ENCODE measurements at regions of chrX and their contacts with region 1.

Region 1: DNA sequence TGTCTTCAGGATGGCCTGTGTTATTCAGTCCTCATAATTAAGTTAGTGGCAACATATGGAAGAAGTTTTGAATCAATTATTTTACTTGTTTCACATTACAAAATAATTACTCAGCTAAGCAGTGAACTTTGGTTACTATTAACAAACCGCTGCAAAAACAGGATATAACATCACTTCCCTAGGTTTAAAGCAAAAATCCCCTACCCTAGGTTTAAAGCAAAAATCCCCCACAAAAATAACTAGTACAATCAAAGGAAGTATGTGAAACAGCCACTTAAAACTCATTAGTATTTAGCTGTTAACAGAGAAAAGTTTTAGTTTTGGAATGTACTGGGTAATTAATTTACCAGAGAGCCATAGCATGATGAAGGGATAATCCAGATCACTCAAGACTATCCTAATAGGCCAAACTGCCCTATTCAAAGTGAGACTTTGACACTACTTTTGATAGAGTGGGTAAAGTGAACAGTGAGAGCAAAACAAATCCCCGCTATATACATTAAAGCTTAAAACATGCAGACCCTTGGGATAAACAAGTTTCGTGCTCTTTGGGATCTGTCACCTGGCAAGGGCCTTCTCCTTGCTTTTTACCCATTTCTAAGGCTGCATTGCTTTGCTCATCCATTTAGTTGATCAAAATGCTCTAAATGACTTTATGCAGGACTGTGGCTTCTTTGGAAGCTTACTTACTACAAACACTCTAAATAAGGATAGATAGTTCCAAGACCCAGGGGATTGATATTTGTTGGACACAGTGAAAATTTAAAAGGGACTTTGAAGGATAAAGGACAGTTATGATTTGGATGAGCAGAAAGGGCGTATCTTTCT is 36.4 kb upstream of the GPR174 start:
- DNase-seq: no peak
- H3K4me3 Mint-ChIP-seq: peak overlapping the region; percentile 32
- H3K27ac Mint-ChIP-seq: peak overlapping the region; percentile 94
- H3K4me1 Mint-ChIP-seq: peaks cover 30% of the 10 kb centered on the region
- H3K27me3 Mint-ChIP-seq: no peaks in the 10 kb centered on the region

Region 2: GRCh38 chrX:79065696-79066095 is 42.4 kb before region 1 on chrX:
- CTCF ChIA-PET with region 1: no interaction called
- POLR2A ChIA-PET with region 1: no interaction called
- DNase-seq: no peak
- H3K4me3 Mint-ChIP-seq: no peak overlapping the region
- H3K27ac Mint-ChIP-seq: no peak overlapping the region
- H3K4me1 Mint-ChIP-seq: no peaks in the 10 kb centered on the region
- H3K27me3 Mint-ChIP-seq: no peaks in the 10 kb centered on the region

Region 3: DNA sequence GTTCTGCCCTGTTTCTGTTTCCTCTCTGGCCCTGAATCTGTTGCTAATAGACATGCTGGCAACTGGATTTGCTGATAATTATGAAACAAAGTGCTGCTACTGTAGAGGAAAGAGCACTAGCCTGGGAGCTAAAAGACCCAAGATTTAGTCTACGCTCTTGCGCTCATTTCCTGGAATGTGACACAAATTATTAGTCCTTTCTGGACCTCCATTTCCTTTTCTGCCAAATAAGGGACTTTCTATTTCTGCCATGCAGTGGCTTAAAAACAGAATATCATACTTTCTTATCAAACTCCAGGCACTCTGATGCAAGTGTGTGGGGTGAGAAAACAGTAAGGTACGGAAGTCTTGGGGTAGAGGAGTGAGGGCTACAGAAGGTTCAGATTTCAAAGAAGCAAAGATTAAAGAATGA is 12.0 kb before region 1 on chrX:
- CTCF ChIA-PET with region 1: interaction called, 4 read pairs
- POLR2A ChIA-PET with region 1: interaction called, 16 read pairs
- DNase-seq: no peak
- H3K4me3 Mint-ChIP-seq: peak overlapping the region; percentile 60
- H3K27ac Mint-ChIP-seq: peak overlapping the region; percentile 91
- H3K4me1 Mint-ChIP-seq: peaks cover 53% of the 10 kb centered on the region
- H3K27me3 Mint-ChIP-seq: no peaks in the 10 kb centered on the region

Region 4: DNA sequence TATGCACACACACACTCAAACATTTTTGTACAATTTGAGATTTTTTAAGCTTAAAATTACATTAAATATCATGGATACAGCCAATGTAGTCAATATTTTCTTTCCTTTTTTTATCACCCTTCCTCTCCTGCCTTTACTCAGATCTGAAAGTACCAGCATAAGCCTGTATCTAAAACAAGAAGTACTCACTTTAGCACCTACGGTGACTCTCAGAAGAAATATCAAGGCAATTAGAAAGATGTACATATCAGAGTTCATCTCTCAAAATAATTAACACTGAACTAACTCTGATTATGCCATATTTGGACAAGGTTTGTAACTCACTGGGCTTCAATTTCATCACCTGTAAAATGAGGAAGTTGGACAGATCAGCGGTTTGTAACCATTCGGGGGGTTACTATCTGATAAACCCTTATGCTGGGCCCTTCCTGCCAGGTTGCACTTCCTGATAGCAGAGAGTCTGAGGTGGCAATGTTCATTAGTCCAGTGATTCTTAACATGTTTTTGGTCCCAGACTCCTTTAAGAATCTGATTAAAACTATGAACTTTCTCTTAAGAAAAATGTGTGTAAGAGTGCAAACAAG is 30.6 kb after region 1 on chrX:
- CTCF ChIA-PET with region 1: no interaction called
- POLR2A ChIA-PET with region 1: interaction called, 10 read pairs
- DNase-seq: no peak
- H3K4me3 Mint-ChIP-seq: peak overlapping the region; percentile 21
- H3K27ac Mint-ChIP-seq: peak overlapping the region; percentile 72
- H3K4me1 Mint-ChIP-seq: peaks cover 44% of the 10 kb centered on the region
- H3K27me3 Mint-ChIP-seq: no peaks in the 10 kb centered on the region

Region 5: GRCh38 chrX:79146640-79147390 is 38.7 kb after region 1 on chrX:
- CTCF ChIA-PET with region 1: no interaction called
- POLR2A ChIA-PET with region 1: interaction called, 20 read pairs
- DNase-seq: no peak
- H3K4me3 Mint-ChIP-seq: peak overlapping the region; percentile 96
- H3K27ac Mint-ChIP-seq: peak overlapping the region; percentile 78
- H3K4me1 Mint-ChIP-seq: peaks cover 43% of the 10 kb centered on the region
- H3K27me3 Mint-ChIP-seq: no peaks in the 10 kb centered on the region

Region 6: DNA sequence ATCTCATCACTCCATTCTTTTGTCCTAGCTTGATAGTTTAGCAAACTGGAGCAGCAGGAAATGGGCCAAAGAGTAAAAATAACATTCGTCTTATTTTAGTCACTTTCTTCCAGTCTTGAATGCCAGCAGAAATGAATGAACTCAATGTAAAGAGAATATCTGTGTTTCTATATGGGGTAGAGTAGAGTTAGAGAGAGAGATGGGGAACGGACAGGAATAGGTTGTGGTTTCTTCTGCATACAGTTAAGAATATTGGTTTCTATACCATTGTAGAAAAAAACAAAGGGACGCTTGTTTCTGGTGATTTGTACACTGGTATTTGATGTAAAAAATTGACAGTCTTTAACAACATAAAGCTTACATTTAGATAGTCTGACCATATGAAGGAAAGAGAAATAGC is 45.2 kb after region 1 on chrX:
- CTCF ChIA-PET with region 1: no interaction called
- POLR2A ChIA-PET with region 1: interaction called, 19 read pairs
- DNase-seq: no peak
- H3K4me3 Mint-ChIP-seq: peak overlapping the region; percentile 71
- H3K27ac Mint-ChIP-seq: peak overlapping the region; percentile 83
- H3K4me1 Mint-ChIP-seq: peaks cover 73% of the 10 kb centered on the region
- H3K27me3 Mint-ChIP-seq: no peaks in the 10 kb centered on the region